AG04450 (cell line): ENCODE measurements at regions of chr1 and their contacts with region 1.

Region 1: DNA sequence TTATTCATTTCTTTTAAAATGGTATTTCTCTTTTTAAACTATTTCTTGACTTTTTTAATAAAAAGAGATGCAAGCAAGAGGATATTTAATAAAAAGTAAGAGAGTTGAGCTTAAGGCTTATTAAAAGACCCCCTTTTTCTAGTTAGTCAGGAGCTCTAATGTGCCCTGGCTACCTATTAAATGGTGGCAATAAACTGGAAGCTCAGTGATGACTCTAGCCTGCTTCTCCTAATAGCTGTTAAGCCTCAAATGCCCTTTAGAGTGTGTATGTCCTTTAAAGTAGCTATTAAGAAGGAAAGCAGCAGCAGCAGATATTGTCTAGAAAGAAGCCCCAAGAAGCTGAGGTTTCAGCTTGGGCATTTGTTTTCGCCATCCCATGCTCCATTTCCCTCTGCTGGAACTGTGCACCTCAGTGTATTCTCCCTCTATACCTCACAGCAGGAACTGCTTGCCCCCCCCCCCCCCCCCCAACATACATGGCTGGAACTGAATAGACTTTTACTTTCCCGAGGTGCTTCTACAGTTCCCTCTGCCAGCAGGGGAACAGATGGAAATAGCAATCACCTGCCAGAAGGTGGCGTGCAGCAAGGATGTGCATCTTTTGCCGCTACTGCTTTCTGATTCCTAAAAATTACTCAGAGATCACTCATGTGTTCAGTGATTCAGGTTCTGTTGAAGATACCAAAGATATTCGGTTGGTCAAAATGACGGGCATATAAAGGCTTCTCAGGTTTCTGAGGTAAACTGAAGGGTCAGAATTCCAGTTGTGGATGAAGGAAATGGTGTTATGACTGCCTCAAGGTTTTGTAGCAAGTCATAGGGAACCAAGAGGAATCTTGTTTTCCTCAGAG is 2.5 kb downstream of the RGS4 start:
- DNase-seq: peak; percentile 75
- H3K4me3 ChIP-seq: peak overlapping the region; percentile 54
- H3K27ac ChIP-seq: peak overlapping the region; percentile 54
- H3K27me3 ChIP-seq: no peaks in the 10 kb centered on the region
- CTCF ChIP-seq: peak; percentile 82

Region 2: GRCh38 chr1:162854245-162854882 is 217.3 kb before region 1 on chr1:
- CTCF ChIA-PET with region 1: interaction called, 118 read pairs
- POLR2A ChIA-PET with region 1: interaction called, 4 read pairs
- DNase-seq: peak; percentile 55
- H3K4me3 ChIP-seq: no peak overlapping the region
- H3K27ac ChIP-seq: no peak overlapping the region
- H3K27me3 ChIP-seq: no peaks in the 10 kb centered on the region
- CTCF ChIP-seq: peak; percentile 87

Region 3: DNA sequence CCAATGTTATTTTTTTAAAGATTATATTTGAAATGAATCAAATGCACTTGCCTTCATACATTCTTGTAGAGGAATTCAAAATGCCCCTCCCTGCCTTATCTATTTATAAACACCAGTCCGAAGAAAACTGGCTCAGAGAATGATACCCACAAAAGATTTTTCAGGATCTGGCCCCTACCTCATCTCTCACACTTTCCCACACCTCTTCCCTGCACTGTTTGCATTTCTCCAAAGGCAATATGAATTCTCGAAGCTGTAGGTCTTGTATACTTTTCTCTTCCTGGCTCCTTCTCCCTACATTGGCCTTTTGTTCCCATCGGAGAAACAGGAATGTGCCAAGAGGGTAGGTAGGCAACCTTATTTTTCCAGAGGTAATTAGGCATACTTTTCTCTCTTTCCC is 198.6 kb before region 1 on chr1:
- CTCF ChIA-PET with region 1: interaction called, 134 read pairs
- POLR2A ChIA-PET with region 1: interaction called, 7 read pairs
- DNase-seq: no peak
- H3K4me3 ChIP-seq: no peak overlapping the region
- H3K27ac ChIP-seq: no peak overlapping the region
- H3K27me3 ChIP-seq: no peaks in the 10 kb centered on the region
- CTCF ChIP-seq: no peak

Region 4: DNA sequence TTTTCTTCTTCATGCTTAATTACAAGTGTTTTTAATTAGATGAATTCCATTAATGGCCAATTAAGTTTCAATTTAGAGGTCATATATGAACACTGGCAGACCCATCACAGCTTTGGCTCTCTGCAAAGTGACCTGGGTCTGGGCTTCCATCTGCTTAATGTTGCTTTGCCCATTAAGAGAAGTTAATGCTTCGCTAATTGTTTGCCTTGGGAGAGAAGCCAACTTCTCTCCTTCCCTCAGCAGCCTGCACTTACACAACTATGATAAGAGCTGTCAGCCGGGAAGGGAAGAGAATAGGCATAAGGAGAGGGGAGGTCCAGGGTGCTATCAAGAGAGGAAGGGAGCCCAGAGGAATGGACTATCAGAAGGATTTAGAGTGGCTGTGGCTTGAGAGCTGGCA is 181.6 kb before region 1 on chr1:
- CTCF ChIA-PET with region 1: interaction called, 30 read pairs
- POLR2A ChIA-PET with region 1: no interaction called
- DNase-seq: no peak
- H3K4me3 ChIP-seq: no peak overlapping the region
- H3K27ac ChIP-seq: no peak overlapping the region
- H3K27me3 ChIP-seq: no peaks in the 10 kb centered on the region
- CTCF ChIP-seq: no peak

Region 5: DNA sequence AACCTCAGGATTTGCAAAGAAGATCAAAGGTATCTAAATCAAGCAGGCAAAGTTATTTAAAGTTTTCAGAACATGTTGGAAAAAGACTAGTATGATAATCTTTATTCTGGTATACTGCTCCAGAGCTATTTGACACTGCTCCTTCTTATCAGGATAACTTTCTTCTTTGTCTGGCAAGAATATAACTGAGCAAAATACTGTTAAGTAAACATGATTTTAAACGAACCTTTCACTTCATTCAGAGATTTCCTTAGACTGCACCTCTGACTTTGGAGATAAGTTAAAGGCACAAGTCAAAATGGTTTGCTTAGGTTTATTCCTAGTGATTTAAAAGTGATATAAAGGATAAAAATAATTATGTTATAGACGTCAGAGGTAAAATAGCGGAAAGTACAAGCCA is 106.7 kb before region 1 on chr1:
- CTCF ChIA-PET with region 1: no interaction called
- POLR2A ChIA-PET with region 1: no interaction called
- DNase-seq: no peak
- H3K4me3 ChIP-seq: no peak overlapping the region
- H3K27ac ChIP-seq: no peak overlapping the region
- H3K27me3 ChIP-seq: no peaks in the 10 kb centered on the region
- CTCF ChIP-seq: no peak

Region 6: DNA sequence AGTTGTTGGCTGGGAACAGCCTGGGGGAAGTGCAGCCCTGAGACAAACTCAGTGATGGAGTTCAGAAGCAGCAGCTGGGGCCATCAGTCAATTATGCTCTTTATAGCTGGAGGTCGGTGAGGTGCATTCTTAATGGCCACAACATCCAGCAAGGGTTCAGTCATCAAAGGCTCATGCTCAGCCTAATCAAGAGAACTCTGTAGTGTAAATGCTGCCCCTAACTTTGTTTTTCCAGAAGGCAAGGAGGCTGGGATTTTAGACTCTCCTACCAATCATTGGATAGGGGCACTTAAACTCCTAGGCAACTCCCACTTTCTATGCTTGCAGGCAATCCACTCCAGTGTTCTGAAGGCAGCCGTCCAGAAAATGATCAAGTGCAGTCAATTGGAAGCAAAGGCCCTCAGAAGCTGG is 17.4 kb before region 1 on chr1:
- CTCF ChIA-PET with region 1: interaction called, 29 read pairs
- POLR2A ChIA-PET with region 1: interaction called, 3 read pairs
- DNase-seq: no peak
- H3K4me3 ChIP-seq: no peak overlapping the region
- H3K27ac ChIP-seq: no peak overlapping the region
- H3K27me3 ChIP-seq: no peaks in the 10 kb centered on the region
- CTCF ChIP-seq: no peak

Region 7: DNA sequence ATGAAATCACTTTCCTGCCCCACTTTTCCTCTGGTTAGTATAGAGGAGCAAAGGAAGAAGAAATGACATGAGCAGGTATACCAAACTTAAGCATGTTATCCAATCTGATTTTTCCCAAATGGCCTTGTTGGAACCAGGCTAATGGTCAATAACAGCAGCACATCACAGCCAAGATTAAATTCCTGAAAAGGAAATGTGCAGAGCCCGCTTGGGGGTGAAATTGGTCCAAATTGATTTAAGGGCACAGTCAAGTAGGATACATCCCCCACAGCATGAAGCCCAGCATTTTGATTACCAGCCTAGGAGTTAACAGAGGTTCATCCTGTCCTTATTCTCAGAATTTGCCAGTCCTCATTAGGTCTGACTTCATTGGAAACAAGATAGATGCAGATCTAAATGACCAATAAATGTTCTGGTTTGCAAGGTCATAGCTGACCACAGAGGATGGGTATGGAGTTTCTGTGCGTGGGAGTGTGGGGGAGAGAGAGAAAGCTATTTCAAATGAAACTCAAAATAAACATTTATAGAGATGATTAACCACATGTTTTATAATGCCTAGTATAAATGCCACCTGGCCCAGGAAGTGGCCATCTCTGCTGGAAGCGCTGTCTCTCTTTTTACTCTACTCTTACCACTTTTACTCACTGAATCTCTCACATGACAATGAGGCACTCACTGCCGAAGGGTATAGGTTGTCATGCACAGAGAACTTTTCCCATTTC is 92.4 kb after region 1 on chr1:
- CTCF ChIA-PET with region 1: interaction called, 25 read pairs
- POLR2A ChIA-PET with region 1: no interaction called
- DNase-seq: peak; percentile 37
- H3K4me3 ChIP-seq: no peak overlapping the region
- H3K27ac ChIP-seq: peak overlapping the region; percentile 24
- H3K27me3 ChIP-seq: no peaks in the 10 kb centered on the region
- CTCF ChIP-seq: no peak

Region 8: DNA sequence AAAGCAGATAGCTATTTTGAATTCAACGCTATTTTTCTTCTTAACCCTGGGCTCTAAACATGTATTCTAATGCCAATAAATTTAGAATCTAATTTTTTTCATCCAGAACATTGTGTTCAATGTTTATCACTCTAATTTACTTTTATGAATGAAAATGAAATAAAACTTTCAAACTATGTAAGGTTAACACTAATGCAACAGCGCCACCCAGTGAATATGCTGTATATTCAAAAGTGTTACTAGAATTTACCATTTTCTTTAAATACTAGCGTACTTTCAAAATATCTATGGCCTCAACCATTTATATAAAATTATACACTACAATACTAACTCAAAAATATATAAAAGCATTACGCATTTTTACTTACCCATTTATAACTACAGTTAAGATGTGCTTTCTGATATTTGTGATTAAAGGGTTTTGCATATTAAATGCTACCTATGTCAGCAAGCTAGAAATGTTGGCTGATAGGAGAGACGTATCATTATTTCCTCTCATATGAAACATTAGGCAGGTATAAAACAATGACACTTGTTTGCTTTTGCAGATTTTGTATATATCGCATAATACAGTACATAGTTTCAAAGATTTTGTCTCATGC is 244.2 kb after region 1 on chr1:
- CTCF ChIA-PET with region 1: interaction called, 260 read pairs
- POLR2A ChIA-PET with region 1: no interaction called
- DNase-seq: no peak
- H3K4me3 ChIP-seq: no peak overlapping the region
- H3K27ac ChIP-seq: no peak overlapping the region
- H3K27me3 ChIP-seq: no peaks in the 10 kb centered on the region
- CTCF ChIP-seq: peak; percentile 60